HEK293T (cell line): ENCODE measurements at regions of chr12 and their contacts with region 1.

Region 1: GRCh38 chr12:57744777-57745484 is at the start of gene TSPAN31:
- DNase-seq: peak; percentile 92

Region 2: DNA sequence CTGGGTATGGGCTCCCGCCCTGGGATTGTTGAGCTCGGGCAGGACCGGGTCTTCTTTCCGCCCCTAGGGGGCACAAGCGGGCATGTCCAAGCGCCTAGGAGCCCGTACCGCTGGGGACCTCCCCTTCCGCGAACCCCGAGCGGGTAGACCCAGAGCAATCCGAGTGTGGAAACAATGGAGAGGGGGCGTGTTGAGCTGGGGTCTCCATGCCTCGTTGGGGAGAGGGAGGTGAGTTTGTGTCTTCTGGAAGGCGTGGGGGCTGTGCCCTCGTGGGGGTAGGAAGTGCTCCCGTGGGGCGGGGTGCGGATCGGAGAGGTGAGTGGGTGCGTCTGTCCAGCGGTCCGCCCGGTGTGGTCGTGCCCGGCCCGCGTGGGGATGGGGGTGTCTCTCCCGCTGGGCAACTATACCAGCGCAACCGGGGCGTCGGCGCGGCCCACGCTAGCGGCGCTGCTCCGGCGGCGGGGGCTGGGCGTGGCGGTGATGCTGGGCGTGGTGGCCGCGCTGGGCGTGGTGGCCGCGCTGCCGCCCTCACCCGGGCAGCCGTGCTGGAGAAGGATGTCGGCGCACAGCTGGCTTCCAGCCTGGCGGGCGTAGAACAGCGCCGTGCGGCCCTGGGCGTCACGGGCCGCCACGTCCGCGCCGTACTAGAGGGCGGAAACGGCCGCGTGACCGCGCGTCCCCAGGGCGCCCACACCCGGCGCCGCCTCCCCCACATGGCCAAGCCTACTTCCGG is 18.6 kb before region 1 on chr12:
- CTCF ChIA-PET with region 1: interaction called, 5 read pairs
- POLR2A ChIA-PET with region 1: interaction called, 42 read pairs
- DNase-seq: peak; percentile 92

Region 3: GRCh38 chr12:57822392-57823130 is 77.6 kb after region 1 on chr12:
- CTCF ChIA-PET with region 1: no interaction called
- POLR2A ChIA-PET with region 1: no interaction called
- DNase-seq: no peak